ENCODE measurements at regions of chr1 and their contacts with region 1.

Region 1: DNA sequence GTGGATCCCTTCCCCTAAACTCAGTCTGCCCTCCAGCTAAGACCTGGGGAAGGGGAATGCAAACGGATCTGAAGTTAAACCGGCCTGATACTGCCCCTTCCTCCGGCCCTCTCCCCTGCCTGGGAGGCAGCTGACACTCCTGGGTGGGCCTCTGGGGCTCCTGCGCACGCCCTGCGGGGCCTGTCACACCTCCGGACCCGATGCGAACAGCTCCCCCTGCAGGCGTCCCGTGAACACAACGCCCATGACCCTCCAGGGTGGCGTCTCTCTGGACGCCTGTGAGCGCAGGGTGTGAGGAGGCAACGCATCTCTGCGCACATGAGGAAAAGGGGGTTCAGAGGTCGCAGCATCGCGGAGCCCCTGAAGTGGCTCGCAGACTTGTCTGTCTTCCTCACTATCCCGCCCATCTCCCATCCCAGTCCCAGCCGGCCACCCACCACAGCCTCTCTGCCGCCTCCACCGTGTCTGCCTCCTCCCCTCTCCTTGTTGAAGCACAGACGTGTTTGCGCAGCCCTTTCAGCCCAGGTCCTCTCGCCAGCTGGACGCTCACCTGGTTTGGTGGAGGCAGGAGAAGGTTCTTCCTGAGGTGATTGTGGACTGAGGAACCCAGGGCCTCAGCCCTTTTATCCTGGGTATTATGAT is 421 bp upstream of the LCE3A start:
- ATAC-seq: peak in 3 of 8 experiments; percentile 41 to 83 (median 44)
- H3K4me3 ChIP-seq: no peak overlapping the region
- H3K27ac ChIP-seq: no peak overlapping the region
- H3K4me1 ChIP-seq: no peaks in the 10 kb centered on the region

Region 2: DNA sequence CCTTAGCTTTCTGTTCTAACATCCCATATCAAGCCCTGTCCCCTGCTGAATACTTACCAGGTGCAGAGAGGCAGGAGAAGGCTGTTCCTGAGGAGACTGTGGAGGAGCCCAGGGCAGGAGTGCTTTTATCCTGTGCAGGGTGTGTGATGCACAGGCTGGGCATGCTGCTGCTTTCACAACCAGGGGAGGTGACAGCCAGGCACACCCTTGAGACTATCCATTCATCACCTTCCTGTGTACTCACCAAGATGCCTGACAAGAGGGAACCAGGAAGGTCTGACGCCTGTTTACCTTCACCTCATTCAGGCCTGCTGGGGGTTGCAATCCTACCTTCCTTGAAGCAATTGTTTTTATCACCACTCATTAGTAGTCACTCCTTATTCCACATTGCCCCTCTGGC is 56.6 kb before region 1 on chr1 and contains the start of gene LCE3E:
- in situ Hi-C with region 1: loop called in 2 of 9 experiments (anchors 10 kb)
- ATAC-seq: peak in 2 of 8 experiments; percentile 32 to 35
- H3K4me3 ChIP-seq: no peak within 1 kb of the TSS
- H3K27ac ChIP-seq: no peak within 1 kb of the TSS
- H3K4me1 ChIP-seq: no peaks in the 10 kb centered on the region
- total RNA-seq, gene LCE3E: 0.81 TPM in 1 of 8 experiments, not detected in the others

Region 3: DNA sequence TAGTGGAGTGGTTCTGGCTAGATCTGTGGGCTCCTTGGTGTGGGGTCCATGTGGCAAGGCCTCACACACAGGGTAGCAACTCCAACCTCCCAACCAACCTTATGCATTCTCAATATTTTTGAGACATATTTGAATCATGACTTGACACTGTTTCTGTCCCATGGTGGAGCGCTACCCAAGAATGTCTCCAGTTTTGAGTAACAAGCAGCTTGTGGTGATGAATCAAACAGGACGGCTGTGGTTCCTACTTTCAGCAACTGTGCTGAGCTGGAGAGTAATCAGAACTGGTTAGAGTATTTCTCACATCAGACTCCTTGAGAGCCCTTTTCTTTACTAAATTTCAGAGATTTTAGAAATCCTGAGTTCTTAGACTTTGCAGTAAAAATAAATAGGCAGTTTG is 46.2 kb before region 1 on chr1:
- in situ Hi-C with region 1: loop called in 1 of 9 experiments (anchors 10 kb)
- ATAC-seq: no peak
- H3K4me3 ChIP-seq: no peak overlapping the region
- H3K27ac ChIP-seq: no peak overlapping the region
- H3K4me1 ChIP-seq: no peaks in the 10 kb centered on the region

Region 4: GRCh38 chr1:152836870-152837269 is 213.5 kb after region 1 on chr1:
- in situ Hi-C with region 1: no loop called
- ATAC-seq: peak in 2 of 8 experiments; percentile 64 to 76
- H3K4me3 ChIP-seq: no peak overlapping the region
- H3K27ac ChIP-seq: no peak overlapping the region
- H3K4me1 ChIP-seq: no peaks in the 10 kb centered on the region